Calu3 (cell line): ENCODE measurements at regions of chr12 and their contacts with region 1.

Region 1: GRCh38 chr12:110245369-110245772 is 35.7 kb upstream of the ATP2A2 start:
- DNase-seq: peak; percentile 49
- H3K4me3 Mint-ChIP-seq: no peak overlapping the region
- H3K27ac Mint-ChIP-seq: peak overlapping the region; percentile 7
- H3K4me1 Mint-ChIP-seq: peaks cover 49% of the 10 kb centered on the region
- H3K27me3 Mint-ChIP-seq: no peaks in the 10 kb centered on the region
- CTCF ChIP-seq: no peak

Region 2: DNA sequence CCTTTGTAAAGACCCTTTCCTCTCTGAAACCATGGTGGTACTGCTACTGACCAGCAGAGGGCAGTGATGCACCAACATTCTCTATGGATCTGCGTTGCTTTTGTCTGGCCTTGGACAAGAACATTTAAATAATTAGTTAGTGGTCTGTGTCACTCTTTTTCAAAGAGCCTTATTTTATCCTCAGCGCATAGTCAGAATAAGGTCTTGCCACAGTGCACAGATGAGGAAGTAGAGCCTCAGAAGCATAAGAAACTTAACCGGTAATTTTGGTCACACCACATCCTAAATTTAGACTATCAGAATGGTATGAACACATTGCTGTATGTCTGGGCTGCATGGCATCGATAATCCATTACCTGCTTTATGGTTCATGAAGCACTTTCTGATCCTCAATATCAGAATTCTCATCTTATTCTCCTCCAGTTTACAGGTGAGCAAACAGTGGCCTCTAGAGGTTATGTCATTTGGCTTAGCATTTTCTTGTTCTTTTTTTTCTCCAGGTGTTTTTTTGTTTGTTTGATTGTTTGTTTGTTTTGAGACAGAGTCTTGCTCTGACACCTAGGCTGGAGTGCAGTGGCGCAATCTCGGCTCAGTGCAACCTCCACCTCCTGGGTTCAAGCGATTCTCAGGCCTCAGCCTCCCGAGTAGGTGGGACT is 144.9 kb before region 1 on chr12:
- CTCF ChIA-PET with region 1: no interaction called
- intact Hi-C with region 1: loop called (anchors 1 kb)
- DNase-seq: peak; percentile 72
- H3K4me3 Mint-ChIP-seq: no peak overlapping the region
- H3K27ac Mint-ChIP-seq: no peak overlapping the region
- H3K4me1 Mint-ChIP-seq: no peaks in the 10 kb centered on the region
- H3K27me3 Mint-ChIP-seq: peaks cover 3% of the 10 kb centered on the region
- CTCF ChIP-seq: peak; percentile 91

Region 3: GRCh38 chr12:110141389-110141788 is 104.0 kb before region 1 on chr12:
- CTCF ChIA-PET with region 1: interaction called, 10 read pairs
- intact Hi-C with region 1: no loop called
- DNase-seq: no peak
- H3K4me3 Mint-ChIP-seq: no peak overlapping the region
- H3K27ac Mint-ChIP-seq: no peak overlapping the region
- H3K4me1 Mint-ChIP-seq: no peaks in the 10 kb centered on the region
- H3K27me3 Mint-ChIP-seq: no peaks in the 10 kb centered on the region
- CTCF ChIP-seq: no peak

Region 4: DNA sequence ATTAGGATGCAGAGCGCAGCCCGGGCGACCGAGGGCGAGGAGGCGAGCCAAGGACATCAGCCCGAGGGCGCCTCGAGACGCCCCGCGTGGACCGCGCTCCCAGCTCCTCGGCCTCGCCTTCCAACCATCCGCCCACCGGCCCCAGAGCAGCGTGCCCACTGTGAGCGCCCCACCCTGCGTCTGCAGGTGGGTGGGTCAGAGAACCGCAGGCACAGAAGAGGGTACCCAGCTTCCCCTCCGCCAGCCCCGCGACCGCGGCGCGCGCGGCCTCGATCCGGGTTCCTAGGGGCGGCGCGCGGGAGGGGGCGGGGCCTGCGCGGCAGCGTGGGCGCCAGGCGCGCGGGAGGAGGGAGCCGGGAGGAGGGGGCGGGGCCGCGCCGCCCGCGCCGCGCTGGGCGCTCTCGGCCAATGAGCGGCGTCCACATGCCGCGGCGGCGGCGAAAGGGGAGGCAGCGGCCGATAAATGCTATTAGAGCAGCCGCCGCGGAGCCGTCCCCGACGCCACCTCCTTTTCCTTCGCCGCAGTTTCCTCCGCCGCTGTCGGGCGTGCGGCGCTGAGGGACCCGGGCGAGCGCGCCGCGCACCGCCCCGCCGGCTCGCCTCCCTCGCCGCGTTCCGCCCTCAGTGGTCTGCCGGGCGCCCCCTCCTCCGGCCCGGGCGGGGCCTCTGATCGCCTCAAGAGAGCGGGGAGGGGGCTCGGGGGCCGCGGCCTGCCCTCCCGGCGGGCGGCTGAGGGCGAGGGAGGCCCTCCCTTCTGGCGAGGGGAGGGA is 35.6 kb after region 1 on chr12 and contains the start of gene ATP2A2:
- CTCF ChIA-PET with region 1: interaction called, 9 read pairs
- intact Hi-C with region 1: loop called (anchors 2 kb)
- DNase-seq: peak; percentile 95
- H3K4me3 Mint-ChIP-seq: peak within 1 kb of the TSS; percentile 90
- H3K27ac Mint-ChIP-seq: peak within 1 kb of the TSS; percentile 88
- H3K4me1 Mint-ChIP-seq: peaks cover 24% of the 10 kb centered on the region
- H3K27me3 Mint-ChIP-seq: no peaks in the 10 kb centered on the region
- CTCF ChIP-seq: no peak
- total RNA-seq, gene ATP2A2: 388 and 437 TPM in 2 replicates

Region 5: GRCh38 chr12:110312581-110313360 is 67.4 kb after region 1 on chr12:
- CTCF ChIA-PET with region 1: no interaction called
- intact Hi-C with region 1: loop called (anchors 2 kb)
- DNase-seq: peak; percentile 23
- H3K4me3 Mint-ChIP-seq: no peak overlapping the region
- H3K27ac Mint-ChIP-seq: peak overlapping the region; percentile 75
- H3K4me1 Mint-ChIP-seq: peaks cover 59% of the 10 kb centered on the region
- H3K27me3 Mint-ChIP-seq: no peaks in the 10 kb centered on the region
- CTCF ChIP-seq: no peak

Region 6: DNA sequence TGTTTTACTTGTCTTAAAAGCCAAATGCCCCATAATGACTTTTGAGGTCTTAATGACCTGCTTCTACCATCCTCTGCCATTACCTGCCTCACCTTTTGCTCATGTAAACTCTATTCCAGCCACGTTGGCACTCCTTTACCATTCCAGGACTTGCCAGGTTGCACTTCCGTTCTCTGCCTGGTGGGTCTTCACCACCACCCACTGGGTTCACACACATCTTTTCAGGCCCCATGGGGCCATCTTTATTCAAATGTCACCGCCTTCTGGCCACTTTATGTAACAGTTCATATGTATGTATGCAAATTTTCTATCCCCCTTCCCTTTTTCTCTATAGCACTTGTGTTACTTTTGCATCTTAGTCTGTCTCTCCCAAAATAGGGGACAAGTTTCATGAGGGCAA is 93.4 kb after region 1 on chr12:
- CTCF ChIA-PET with region 1: no interaction called
- intact Hi-C with region 1: loop called (anchors 1 kb)
- DNase-seq: no peak
- H3K4me3 Mint-ChIP-seq: peak overlapping the region; percentile 28
- H3K27ac Mint-ChIP-seq: peak overlapping the region; percentile 89
- H3K4me1 Mint-ChIP-seq: peaks cover 38% of the 10 kb centered on the region
- H3K27me3 Mint-ChIP-seq: no peaks in the 10 kb centered on the region
- CTCF ChIP-seq: no peak

Region 7: GRCh38 chr12:110345176-110345661 is 99.8 kb after region 1 on chr12:
- CTCF ChIA-PET with region 1: no interaction called
- intact Hi-C with region 1: loop called (anchors 1 kb)
- DNase-seq: peak; percentile 94
- H3K4me3 Mint-ChIP-seq: peak overlapping the region; percentile 46
- H3K27ac Mint-ChIP-seq: peak overlapping the region; percentile 96
- H3K4me1 Mint-ChIP-seq: peaks cover 34% of the 10 kb centered on the region
- H3K27me3 Mint-ChIP-seq: no peaks in the 10 kb centered on the region
- CTCF ChIP-seq: no peak

Region 8: GRCh38 chr12:110794623-110795280 is 549.4 kb after region 1 on chr12:
- CTCF ChIA-PET with region 1: no interaction called
- intact Hi-C with region 1: no loop called
- DNase-seq: no peak
- H3K4me3 Mint-ChIP-seq: no peak overlapping the region
- H3K27ac Mint-ChIP-seq: no peak overlapping the region
- H3K4me1 Mint-ChIP-seq: peaks cover 18% of the 10 kb centered on the region
- H3K27me3 Mint-ChIP-seq: no peaks in the 10 kb centered on the region
- CTCF ChIP-seq: no peak